Head of caudate nucleus (tissue), 42 donors: ENCODE measurements at regions of chr3 and their contacts with region 1.

Region 1: GRCh38 chr3:157159762-157160657 is at the start of gene CCNL1:
- DNase-seq: peak; percentile 89 to 98 (median 96)

Region 2: GRCh38 chr3:157174649-157175498 is 14.9 kb after region 1 on chr3:
- intact Hi-C with region 1: loop called (anchors 1 kb)
- DNase-seq: peak; percentile 94 to 99 (median 98)